Sciatic nerve (tissue), 2 donors: ENCODE measurements at regions of chr6 and their contacts with region 1.

Region 1: DNA sequence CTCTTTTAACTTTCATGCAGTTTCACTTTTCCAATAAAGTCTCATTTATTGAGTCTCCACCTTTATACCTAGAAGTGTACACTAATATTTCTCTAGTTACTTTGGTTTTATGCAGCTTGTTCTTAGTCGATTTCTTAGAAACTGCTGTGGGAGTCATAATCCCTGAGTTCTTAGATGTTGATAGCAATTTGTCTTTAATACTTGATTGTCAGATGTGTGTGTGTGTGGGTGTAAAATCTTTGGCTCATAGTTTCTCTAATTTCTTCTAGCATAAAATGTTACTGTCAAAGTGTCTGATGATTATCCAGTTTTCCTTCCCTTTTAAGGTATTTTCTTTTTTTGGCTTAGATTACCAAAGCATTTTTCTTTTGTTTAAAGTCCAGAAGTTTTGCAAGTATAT is 473.8 kb upstream of the PTCHD4 start:
- DNase-seq: no peak
- ATAC-seq: no peak

Region 2: DNA sequence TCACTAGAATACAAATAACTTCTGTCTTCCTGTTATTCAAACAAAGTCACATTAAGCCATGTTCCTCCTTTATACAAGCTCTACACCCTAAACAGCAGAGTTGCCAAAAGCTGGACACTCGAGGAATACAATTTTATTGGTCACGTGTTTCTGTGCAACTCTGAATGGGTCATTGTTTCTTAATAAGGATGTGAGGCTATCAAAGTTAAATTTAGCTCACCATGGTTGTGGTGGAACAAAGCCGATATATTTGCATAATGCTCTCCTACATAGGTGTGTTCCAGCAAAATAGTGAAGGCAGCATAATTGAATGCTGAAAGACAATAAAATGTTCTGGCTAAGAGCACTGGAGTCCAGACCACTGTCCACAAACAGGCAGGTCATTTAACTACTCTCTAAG is 1144.1 kb before region 1 on chr6:
- intact Hi-C with region 1: loop called (anchors 5 kb)
- DNase-seq: no peak
- ATAC-seq: peak; percentile 71

Region 3: GRCh38 chr6:48568856-48569255 is 16.0 kb before region 1 on chr6:
- intact Hi-C with region 1: no loop called
- DNase-seq: no peak
- ATAC-seq: no peak

Region 4: GRCh38 chr6:48641544-48641943 is 56.7 kb after region 1 on chr6:
- intact Hi-C with region 1: no loop called
- DNase-seq: no peak
- ATAC-seq: no peak